Ascending aorta (tissue), 2 donors: ENCODE measurements at regions of chrX and their contacts with region 1.

Region 1: GRCh38 chrX:154428176-154429010 is at the start of gene ATP6AP1:
- DNase-seq: peak; percentile 78 to 95
- H3K4me3 ChIP-seq: peak within 1 kb of the TSS; percentile 43 to 86
- H3K27ac ChIP-seq: peak within 1 kb of the TSS; percentile 59 to 83
- H3K4me1 ChIP-seq: peaks cover 2 to 8% of the 10 kb centered on the region in 2 donors
- H3K27me3 ChIP-seq: no peaks in the 10 kb centered on the region
- CTCF ChIP-seq: no peak
- total RNA-seq, gene ATP6AP1: 52.6 TPM

Region 2: DNA sequence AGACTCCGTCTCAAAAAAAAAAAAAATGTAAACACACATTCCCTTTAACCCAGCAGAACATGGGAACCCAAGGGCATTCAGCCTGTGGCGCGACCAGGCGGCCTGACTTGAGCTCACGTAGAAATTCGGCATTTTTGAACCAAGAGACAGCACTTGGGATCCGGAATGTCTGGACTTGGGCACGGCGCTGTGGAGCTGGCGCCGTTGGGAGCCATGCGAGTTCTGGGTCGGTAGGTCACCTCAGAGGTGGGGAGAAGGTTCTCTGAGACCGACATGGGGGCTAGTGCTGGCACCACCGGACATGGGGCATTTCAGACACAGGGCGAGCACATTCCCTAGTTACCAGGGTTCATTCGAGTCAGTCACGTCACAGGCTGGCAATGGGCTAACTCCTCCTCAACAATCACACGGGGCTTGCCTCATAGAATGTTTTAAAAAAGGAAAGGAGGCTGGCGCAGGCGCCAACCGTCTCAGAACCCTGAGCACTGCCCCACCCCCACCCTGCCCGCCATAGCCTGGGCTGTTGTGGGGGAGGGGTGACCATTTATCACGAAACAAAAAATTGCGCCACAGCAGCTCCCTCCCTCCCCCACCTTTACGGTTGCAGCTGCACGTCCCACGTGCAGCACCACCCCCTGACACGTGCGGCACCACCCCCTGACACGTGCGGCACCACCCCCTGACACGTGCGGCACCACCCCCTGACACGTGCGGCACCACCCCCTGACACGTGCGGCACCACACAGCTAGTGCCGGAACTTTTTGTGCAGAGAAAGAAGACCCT is 133.4 kb before region 1 on chrX and contains the start of gene TEX28:
- intact Hi-C with region 1: no loop called
- DNase-seq: no peak
- H3K4me3 ChIP-seq: no peak within 1 kb of the TSS
- H3K27ac ChIP-seq: no peak within 1 kb of the TSS
- H3K4me1 ChIP-seq: no peaks in the 10 kb centered on the region
- H3K27me3 ChIP-seq: no peaks in the 10 kb centered on the region
- CTCF ChIP-seq: no peak
- total RNA-seq, gene TEX28: not detected

Region 3: GRCh38 chrX:154411322-154411980 is 16.9 kb before region 1 on chrX and contains the start of gene TAFAZZIN:
- intact Hi-C with region 1: loop called (anchors 1 kb)
- DNase-seq: peak in 1 of 2 donors; percentile 81
- H3K4me3 ChIP-seq: peak within 1 kb of the TSS; percentile 60 to 82
- H3K27ac ChIP-seq: peak within 1 kb of the TSS; percentile 89 to 91
- H3K4me1 ChIP-seq: peaks cover 0 to 9% of the 10 kb centered on the region in 2 donors
- H3K27me3 ChIP-seq: no peaks in the 10 kb centered on the region
- CTCF ChIP-seq: no peak
- total RNA-seq, gene TAFAZZIN: 33.4 TPM

Region 4: DNA sequence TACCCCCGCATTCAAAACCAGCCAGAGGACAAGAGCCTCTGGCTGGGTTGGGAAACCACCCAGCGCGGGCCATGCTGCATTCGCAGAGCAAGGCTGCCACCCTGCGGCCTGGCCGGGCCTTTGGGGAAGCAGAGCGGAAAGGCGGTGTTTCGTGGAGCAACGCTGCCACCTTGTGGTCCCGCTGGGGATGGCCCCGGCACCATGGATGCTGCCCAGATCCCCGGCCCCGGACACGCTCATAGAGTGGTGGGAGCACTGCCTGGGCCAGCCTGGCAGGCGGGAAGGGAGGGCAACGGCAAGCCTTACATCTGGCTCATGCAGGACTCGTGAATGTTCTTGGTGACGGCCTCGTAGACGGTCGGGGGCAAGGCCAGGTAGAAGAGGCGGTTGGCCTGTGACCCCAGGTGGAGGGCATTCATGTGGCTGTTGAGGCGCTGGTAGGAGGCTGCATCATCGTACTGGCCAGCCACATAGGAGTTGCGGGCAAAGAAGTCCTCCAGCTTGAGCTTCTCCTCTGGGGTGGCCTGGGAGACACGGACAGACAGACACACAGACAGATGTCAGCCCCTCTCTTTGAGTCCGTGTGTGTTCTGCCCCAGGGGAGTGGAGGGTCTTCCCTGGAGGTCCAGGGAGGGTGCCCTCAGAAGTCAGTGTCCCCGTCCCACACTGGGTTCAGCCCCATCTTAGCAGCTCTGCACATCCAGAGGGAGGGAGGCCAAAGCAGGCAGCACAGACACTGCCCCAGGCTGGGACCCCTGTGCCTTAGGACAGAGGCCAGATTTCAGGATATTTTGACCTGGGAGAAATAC is 106.7 kb after region 1 on chrX:
- intact Hi-C with region 1: loop called (anchors 5 kb)
- DNase-seq: peak in 1 of 2 donors; percentile 92
- H3K4me3 ChIP-seq: no peak overlapping the region
- H3K27ac ChIP-seq: no peak overlapping the region
- H3K4me1 ChIP-seq: peaks cover 0 to 3% of the 10 kb centered on the region in 2 donors
- H3K27me3 ChIP-seq: no peaks in the 10 kb centered on the region
- CTCF ChIP-seq: peak; percentile 96 to 100 (median 99)